H1 (cell line): ENCODE measurements at regions of chr2 and their contacts with region 1.

Region 1: GRCh38 chr2:205776139-205776538 is 93.8 kb downstream of the NRP2 start:
- DNase-seq: peak; percentile 64 to 96
- H3K4me3 ChIP-seq: no peak overlapping the region
- H3K27ac ChIP-seq: no peak overlapping the region
- H3K4me1 ChIP-seq: no peaks in the 10 kb centered on the region; a peak in 2 of 7 replicates
- H3K27me3 ChIP-seq: no peaks in the 10 kb centered on the region; a peak in 1 of 7 replicates
- CTCF ChIP-seq: peak; percentile 95 to 99 (median 98)
- EP300 ChIP-seq: no peak
- POLR2A ChIP-seq: no peak
- RAD21 ChIP-seq: peak; percentile 96 to 97

Region 2: GRCh38 chr2:205721057-205721449 is 55.1 kb before region 1 on chr2:
- CTCF ChIA-PET with region 1: interaction called, 11 read pairs
- POLR2A ChIA-PET with region 1: interaction called, 3 read pairs
- DNase-seq: no peak
- H3K4me3 ChIP-seq: peak overlapping the region in 2 of 4 experiments; percentile 14 to 20; a peak in 2 of 8 replicates
- H3K27ac ChIP-seq: peak overlapping the region; percentile 54; the same call in 1 of the 2 replicates
- H3K4me1 ChIP-seq: peaks cover 12 to 24% (median 21%) of the 10 kb centered on the region in 4 experiments
- H3K27me3 ChIP-seq: no peaks in the 10 kb centered on the region
- CTCF ChIP-seq: peak; percentile 6 to 60 (median 53)
- EP300 ChIP-seq: no peak
- POLR2A ChIP-seq: no peak
- RAD21 ChIP-seq: peak in 1 of 2 experiments; percentile 31; a peak in 2 of 4 replicates

Region 3: DNA sequence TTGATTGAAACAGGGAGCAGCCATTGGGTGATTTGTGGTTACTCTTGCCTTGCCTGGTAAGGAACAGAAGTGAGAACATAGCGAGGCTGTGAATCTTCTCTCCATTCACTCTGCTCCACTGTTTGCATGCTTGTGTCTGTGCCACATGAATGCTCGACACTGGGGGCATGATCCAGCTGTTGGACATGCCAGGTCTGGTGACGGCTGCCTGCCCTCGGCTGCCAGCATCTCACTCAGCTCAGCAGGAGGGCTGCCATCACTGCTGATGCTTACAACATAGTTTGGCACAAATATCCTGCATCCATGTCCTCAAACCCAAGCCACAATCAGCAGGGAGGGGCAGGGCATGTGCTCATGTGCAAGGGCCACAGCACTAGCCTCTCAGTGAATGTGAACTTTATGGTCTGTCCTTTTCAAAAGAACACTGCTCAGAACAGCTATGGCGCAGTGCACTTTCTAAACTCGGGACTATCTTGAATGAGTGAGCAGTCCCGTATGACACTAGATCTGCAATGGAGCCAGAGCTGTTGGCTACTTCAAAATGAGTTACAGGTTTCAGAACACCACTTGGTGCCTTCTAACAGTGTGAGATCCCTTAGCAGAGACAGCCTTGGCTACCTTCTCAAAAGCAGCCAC is 32.5 kb after region 1 on chr2:
- CTCF ChIA-PET with region 1: interaction called, 64 read pairs
- POLR2A ChIA-PET with region 1: no interaction called
- DNase-seq: no peak
- H3K4me3 ChIP-seq: no peak overlapping the region
- H3K27ac ChIP-seq: no peak overlapping the region
- H3K4me1 ChIP-seq: peaks cover 0 to 2% (median 0%) of the 10 kb centered on the region in 4 experiments; a peak in 1 of 7 replicates
- H3K27me3 ChIP-seq: no peaks in the 10 kb centered on the region
- CTCF ChIP-seq: no peak
- EP300 ChIP-seq: no peak
- POLR2A ChIP-seq: no peak
- RAD21 ChIP-seq: no peak

Region 4: GRCh38 chr2:205834796-205835195 is 58.7 kb after region 1 on chr2:
- CTCF ChIA-PET with region 1: interaction called, 30 read pairs
- POLR2A ChIA-PET with region 1: no interaction called
- DNase-seq: peak in 1 of 2 experiments; percentile 38
- H3K4me3 ChIP-seq: no peak overlapping the region
- H3K27ac ChIP-seq: no peak overlapping the region
- H3K4me1 ChIP-seq: peaks cover 0 to 8% (median 5%) of the 10 kb centered on the region in 4 experiments; a peak in 4 of 7 replicates
- H3K27me3 ChIP-seq: no peaks in the 10 kb centered on the region
- CTCF ChIP-seq: no peak
- EP300 ChIP-seq: no peak
- POLR2A ChIP-seq: no peak
- RAD21 ChIP-seq: no peak

Region 5: GRCh38 chr2:205885492-205886099 is 109.5 kb after region 1 on chr2:
- CTCF ChIA-PET with region 1: interaction called, 185 read pairs
- POLR2A ChIA-PET with region 1: interaction called, 3 read pairs
- DNase-seq: peak; percentile 82 to 98
- H3K4me3 ChIP-seq: no peak overlapping the region
- H3K27ac ChIP-seq: no peak overlapping the region
- H3K4me1 ChIP-seq: peaks cover 0 to 5% (median 0%) of the 10 kb centered on the region in 4 experiments; a peak in 2 of 7 replicates
- H3K27me3 ChIP-seq: no peaks in the 10 kb centered on the region
- CTCF ChIP-seq: peak; percentile 85 to 99 (median 94)
- EP300 ChIP-seq: no peak
- POLR2A ChIP-seq: no peak
- RAD21 ChIP-seq: peak; percentile 98 to 99

Region 6: GRCh38 chr2:205925373-205926337 is 149.5 kb after region 1 on chr2:
- CTCF ChIA-PET with region 1: interaction called, 136 read pairs
- POLR2A ChIA-PET with region 1: no interaction called
- DNase-seq: peak; percentile 46 to 96
- H3K4me3 ChIP-seq: peak overlapping the region in 1 of 4 experiments; percentile 47; a peak in 4 of 8 replicates
- H3K27ac ChIP-seq: no peak overlapping the region
- H3K4me1 ChIP-seq: peaks cover 0 to 11% (median 2%) of the 10 kb centered on the region in 4 experiments; a peak in 4 of 7 replicates
- H3K27me3 ChIP-seq: peaks cover 0 to 20% (median 11%) of the 10 kb centered on the region in 4 experiments; a peak in 5 of 7 replicates
- CTCF ChIP-seq: peak; percentile 89 to 94 (median 94)
- EP300 ChIP-seq: no peak
- POLR2A ChIP-seq: no peak
- RAD21 ChIP-seq: peak; percentile 98 to 99

Region 7: GRCh38 chr2:205967391-205968075 is 191.4 kb after region 1 on chr2:
- CTCF ChIA-PET with region 1: no interaction called
- POLR2A ChIA-PET with region 1: no interaction called
- DNase-seq: no peak
- H3K4me3 ChIP-seq: no peak overlapping the region
- H3K27ac ChIP-seq: no peak overlapping the region
- H3K4me1 ChIP-seq: peaks cover 3 to 9% (median 3%) of the 10 kb centered on the region in 4 experiments; a peak in 6 of 7 replicates
- H3K27me3 ChIP-seq: no peaks in the 10 kb centered on the region
- CTCF ChIP-seq: no peak
- EP300 ChIP-seq: no peak
- POLR2A ChIP-seq: no peak
- RAD21 ChIP-seq: no peak